ENCODE measurements at regions of chr6 and their contacts with region 1.

Region 1: DNA sequence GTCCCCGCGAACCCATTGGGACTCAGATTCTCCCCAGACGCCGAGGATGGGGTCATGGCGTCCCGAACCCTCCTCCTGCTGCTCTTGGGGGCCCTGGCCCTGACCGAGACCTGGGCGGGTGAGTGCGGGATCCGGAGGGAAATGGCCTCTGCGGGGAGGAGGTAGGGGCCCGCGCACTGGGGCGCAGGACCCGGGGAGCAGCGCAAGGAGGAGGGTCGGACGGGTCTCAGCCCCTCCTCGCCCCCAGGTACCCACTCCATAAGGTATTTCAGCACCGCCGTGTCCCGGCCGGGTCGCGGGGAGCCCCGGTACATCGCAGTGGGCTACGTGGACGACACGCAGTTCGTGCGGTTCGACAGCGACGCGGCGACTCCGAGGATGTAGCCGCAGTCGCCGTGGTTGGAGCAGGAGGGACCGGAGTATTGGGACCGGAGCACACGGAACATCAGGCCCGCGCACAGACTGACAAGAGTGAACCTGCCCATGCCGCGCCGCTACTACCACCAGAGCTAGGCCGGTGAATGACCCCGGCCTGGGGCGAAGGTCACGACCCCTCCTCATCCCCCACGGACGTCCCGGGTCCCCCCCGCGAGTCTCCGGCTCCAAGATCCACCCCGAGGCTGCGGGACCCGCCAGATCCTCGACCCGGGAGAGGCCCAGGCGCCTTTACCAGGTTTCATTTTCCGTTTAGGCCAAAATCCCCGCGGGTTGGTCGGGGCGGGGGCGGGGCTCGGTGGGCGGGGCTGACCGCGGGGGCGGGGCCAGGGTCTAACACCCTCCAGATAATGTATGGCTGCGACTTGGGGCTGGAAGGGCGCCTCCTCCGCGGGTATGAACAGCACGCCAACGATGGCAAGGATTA is 15.7 kb upstream of the HLA-A start:
- DNase-seq: peak; percentile 69 to 87 (median 76)
- ATAC-seq: peak; percentile 69 to 92 (median 88)
- H3K4me3 ChIP-seq: peak overlapping the region in 11 of 12 donors; percentile 55 to 82 (median 65)
- H3K27ac ChIP-seq: peak overlapping the region in 11 of 12 donors; percentile 67 to 96 (median 88)
- H3K4me1 ChIP-seq: peaks cover 0 to 15% (median 0%) of the 10 kb centered on the region in 12 donors
- H3K27me3 ChIP-seq: no peaks in the 10 kb centered on the region
- CTCF ChIP-seq: no peak
- POLR2A ChIP-seq: peak in 1 of 2 donors; percentile 30

Region 2: GRCh38 chr6:29887819-29888776 is 38.5 kb before region 1 on chr6:
- intact Hi-C with region 1: loop called in 5 of 10 experiments (anchors 2 to 5 kb)
- DNase-seq: peak; percentile 68 to 91 (median 82)
- ATAC-seq: peak; percentile 78 to 92 (median 90)
- H3K4me3 ChIP-seq: peak overlapping the region in 11 of 12 donors; percentile 50 to 93 (median 70)
- H3K27ac ChIP-seq: peak overlapping the region in 11 of 12 donors; percentile 49 to 96 (median 87)
- H3K4me1 ChIP-seq: peaks cover 0 to 17% (median 0%) of the 10 kb centered on the region in 12 donors
- H3K27me3 ChIP-seq: no peaks in the 10 kb centered on the region
- CTCF ChIP-seq: no peak
- POLR2A ChIP-seq: no peak

Region 3: DNA sequence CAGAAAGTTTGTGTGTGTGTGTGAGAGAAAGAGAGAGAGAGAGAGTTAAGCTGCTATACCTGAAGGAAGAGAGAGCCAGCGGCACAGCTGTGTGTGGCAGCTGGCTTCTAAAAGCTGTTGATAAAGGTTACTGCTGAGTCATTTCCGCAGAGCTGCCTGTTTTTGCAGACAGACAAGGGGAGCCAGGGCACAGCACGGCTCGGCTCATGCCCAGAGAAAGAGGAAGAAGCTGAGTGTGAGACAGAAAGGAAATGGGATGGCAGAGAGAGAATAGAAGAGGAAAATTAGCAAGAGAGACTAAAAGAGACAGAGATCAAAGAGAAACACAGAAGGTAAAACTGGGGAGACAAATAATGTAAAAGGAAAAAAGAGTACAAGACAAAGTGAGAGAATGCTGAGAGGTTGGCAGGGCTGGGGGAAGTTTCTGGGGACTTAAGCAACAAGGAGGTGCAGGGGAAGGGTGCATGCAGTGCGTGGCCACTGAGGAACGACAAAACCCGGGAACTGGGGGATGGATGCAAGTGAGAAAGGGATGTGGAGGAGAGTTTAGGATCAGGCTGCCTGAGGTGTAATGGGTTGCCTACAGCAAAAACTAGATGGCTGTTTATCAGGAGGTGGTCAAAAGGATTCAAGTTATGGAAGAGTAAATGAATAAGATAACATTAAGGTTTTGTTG is 38.4 kb after region 1 on chr6:
- intact Hi-C with region 1: loop called in 4 of 10 experiments (anchors 2 to 10 kb)
- DNase-seq: peak; percentile 81 to 90 (median 87)
- ATAC-seq: peak; percentile 79 to 93 (median 90)
- H3K4me3 ChIP-seq: peak overlapping the region; percentile 12 to 77 (median 56)
- H3K27ac ChIP-seq: peak overlapping the region; percentile 84 to 98 (median 90)
- H3K4me1 ChIP-seq: peaks cover 15 to 58% (median 47%) of the 10 kb centered on the region in 12 donors
- H3K27me3 ChIP-seq: no peaks in the 10 kb centered on the region
- CTCF ChIP-seq: no peak
- POLR2A ChIP-seq: peak in 1 of 2 donors; percentile 61

Region 4: GRCh38 chr6:29989211-29989610 is 62.6 kb after region 1 on chr6:
- intact Hi-C with region 1: loop called in 1 of 10 experiments (anchors 10 kb)
- DNase-seq: no peak
- ATAC-seq: no peak
- H3K4me3 ChIP-seq: no peak overlapping the region
- H3K27ac ChIP-seq: no peak overlapping the region
- H3K4me1 ChIP-seq: no peaks in the 10 kb centered on the region
- H3K27me3 ChIP-seq: no peaks in the 10 kb centered on the region
- CTCF ChIP-seq: no peak
- POLR2A ChIP-seq: no peak

Region 5: DNA sequence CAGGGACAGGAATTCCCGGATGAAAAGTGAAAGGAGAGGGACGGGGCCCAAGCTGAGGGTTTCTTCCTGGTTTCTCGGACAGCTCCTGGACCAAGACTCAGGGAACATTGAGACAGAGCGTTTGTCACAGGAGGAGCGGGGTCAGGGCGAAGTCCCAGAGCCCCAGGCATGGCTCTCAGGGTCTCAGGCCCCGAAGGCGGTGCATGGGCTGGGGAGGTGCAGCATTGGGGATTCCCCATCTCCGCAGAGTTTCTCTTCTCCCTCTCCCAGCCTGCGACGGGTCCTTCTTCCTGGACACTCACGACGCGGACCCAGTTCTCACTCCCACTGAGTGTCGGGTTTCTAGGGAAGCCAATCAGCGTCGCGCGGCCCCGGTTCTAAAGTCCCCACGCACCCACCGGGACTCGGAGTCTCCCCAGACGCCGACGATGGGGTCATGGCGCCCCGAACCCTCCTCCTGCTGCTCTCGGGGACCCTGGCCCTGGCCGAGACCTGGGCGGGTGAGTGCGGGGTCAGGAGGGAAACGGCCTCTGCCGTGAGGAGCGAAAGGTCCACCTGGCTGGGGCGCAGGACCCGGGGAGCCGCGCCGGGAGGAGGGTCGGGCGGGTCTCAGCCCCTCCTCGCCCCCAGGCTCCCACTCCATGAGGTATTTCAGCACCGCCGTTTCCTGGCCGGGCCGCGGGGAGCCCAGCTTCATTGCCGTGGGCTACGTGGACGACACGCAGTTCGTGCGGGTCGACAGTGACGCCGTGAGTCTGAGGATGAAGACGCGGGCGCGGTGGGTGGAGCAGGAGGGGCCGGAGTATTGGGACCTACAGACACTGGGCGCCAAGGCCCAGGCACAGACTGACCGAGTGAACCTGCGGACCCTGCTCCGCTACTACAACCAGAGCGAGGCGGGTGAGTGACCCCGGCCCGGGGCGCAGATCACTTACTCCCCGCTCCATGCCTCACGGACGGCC is 79.8 kb after region 1 on chr6:
- intact Hi-C with region 1: loop called in 1 of 10 experiments (anchors 5 kb)
- DNase-seq: peak; percentile 38 to 72 (median 53)
- ATAC-seq: peak; percentile 62 to 80 (median 70)
- H3K4me3 ChIP-seq: peak overlapping the region; percentile 43 to 82 (median 68)
- H3K27ac ChIP-seq: peak overlapping the region in 6 of 12 donors; percentile 10 to 49 (median 22)
- H3K4me1 ChIP-seq: peaks cover 0 to 19% (median 12%) of the 10 kb centered on the region in 12 donors
- H3K27me3 ChIP-seq: peaks cover 0 to 31% (median 10%) of the 10 kb centered on the region in 9 donors
- CTCF ChIP-seq: peak in 1 of 12 donors; percentile 10
- POLR2A ChIP-seq: no peak

Measured in heart left ventricle (tissue), 16 donors.